ENCODE measurements at regions of chr5 and their contacts with region 1.

Region 1: GRCh38 chr5:671459-672328 is 21.5 kb downstream of the TPPP start:
- DNase-seq: peak; percentile 84
- ATAC-seq: peak; percentile 85
- H3K4me3 Mint-ChIP-seq: no peak overlapping the region
- H3K27ac Mint-ChIP-seq: no peak overlapping the region
- H3K4me1 Mint-ChIP-seq: peaks cover 9% of the 10 kb centered on the region
- H3K27me3 Mint-ChIP-seq: no peaks in the 10 kb centered on the region

Region 2: DNA sequence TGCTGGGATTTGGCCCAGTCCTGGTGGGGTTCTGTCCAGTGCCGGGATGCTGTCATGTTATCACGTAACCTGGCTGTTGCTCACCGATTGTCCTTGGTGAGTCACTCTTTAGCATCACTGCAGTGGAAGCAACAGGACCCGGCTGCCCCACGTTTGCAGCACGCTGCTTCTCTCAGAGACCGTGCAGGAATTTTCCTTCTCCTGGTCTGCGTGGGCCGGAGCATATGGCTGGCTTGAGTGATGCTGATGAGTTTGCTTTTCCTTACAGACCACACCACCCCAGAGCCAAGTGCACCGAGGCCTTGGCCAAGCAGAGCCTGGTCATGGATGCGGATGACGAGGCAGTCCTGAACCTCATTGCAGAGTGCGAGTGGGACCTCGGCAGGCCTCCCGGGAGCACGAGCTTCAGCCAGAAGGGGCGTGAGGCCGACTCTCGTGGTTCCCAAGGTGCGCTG is 38.2 kb before region 1 on chr5:
- CTCF ChIA-PET with region 1: no interaction called
- POLR2A ChIA-PET with region 1: no interaction called
- intact Hi-C with region 1: no loop called
- DNase-seq: no peak
- ATAC-seq: no peak
- H3K4me3 Mint-ChIP-seq: no peak overlapping the region
- H3K27ac Mint-ChIP-seq: no peak overlapping the region
- H3K4me1 Mint-ChIP-seq: no peaks in the 10 kb centered on the region
- H3K27me3 Mint-ChIP-seq: no peaks in the 10 kb centered on the region

Region 3: DNA sequence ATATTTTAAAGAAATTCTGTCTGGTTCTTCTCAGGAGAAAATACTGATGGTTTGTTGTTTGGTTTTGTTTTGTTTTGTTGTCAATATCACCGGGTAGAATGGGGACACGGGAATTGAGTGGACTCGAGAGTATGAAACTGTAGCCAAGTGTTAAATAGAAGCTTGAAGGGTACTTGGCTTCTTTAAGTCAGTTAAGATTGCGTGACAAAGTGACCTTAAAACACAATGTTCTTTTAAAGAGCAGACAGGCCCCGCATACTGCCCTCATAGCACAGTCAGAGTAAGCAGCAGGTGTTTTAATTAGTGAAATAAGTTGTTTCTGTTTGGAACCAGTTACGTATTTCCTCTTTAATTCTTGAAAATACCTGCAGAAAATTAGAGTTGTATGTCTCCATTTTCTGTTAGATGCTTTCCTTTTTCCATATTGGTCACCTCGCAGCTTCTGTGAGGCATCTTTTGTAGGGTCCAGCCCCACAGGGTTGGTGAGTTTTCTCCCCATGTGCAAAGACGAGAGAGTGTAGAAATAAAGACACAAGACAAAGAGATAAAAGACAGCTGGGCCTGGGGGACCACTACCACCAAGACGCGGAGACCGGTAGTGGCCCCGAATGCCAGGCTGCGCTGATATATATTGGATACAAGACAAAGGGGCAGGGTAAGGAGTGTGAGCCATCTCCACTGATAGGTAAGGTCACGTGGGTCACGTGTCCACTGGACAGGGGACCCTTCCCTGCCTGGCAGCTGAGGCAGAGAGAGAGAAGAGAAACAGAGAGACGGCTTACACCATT is 230.6 kb after region 1 on chr5:
- CTCF ChIA-PET with region 1: interaction called, 6 read pairs
- POLR2A ChIA-PET with region 1: no interaction called
- intact Hi-C with region 1: loop called (anchors 2 kb)
- DNase-seq: no peak
- ATAC-seq: no peak
- H3K4me3 Mint-ChIP-seq: no peak overlapping the region
- H3K27ac Mint-ChIP-seq: no peak overlapping the region
- H3K4me1 Mint-ChIP-seq: no peaks in the 10 kb centered on the region
- H3K27me3 Mint-ChIP-seq: no peaks in the 10 kb centered on the region